Mammary epithelial cell (primary cell): ENCODE measurements at regions of chr5 and their contacts with region 1.

Region 1: GRCh38 chr5:134851307-134851923 is 5.6 kb downstream of the C5orf24 start:
- DNase-seq: peak; percentile 37
- H3K4me3 ChIP-seq: no peak overlapping the region
- H3K27ac ChIP-seq: no peak overlapping the region
- H3K4me1 ChIP-seq: peaks cover 4% of the 10 kb centered on the region
- H3K27me3 ChIP-seq: no peaks in the 10 kb centered on the region
- CTCF ChIP-seq: peak; percentile 45 to 74

Region 2: DNA sequence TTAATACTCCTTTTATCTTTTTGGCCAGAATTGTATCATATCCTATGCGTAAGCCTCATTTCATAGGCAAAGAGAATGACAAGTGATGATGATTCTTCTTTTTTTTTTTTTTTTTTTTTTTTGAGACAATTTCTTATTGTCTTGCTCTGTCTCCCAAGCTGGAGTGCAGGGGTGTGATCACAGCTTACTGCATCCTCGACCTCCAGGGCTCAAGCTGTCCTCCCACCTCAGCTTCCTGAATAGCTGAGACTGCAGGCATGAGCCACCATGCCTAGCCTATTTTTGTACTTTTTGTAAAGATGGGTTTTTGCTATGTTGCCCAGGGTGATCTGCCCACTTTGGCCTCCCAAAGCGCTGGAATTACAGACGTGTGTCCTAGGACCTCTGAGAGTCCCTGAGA is 47.6 kb before region 1 on chr5:
- CTCF ChIA-PET with region 1: no interaction called
- dilution Hi-C with region 1: no loop called
- in situ Hi-C with region 1: no loop called
- intact Hi-C with region 1: loop called (anchors 2 kb)
- DNase-seq: no peak
- H3K4me3 ChIP-seq: no peak overlapping the region
- H3K27ac ChIP-seq: no peak overlapping the region
- H3K4me1 ChIP-seq: peaks cover 6% of the 10 kb centered on the region
- H3K27me3 ChIP-seq: no peaks in the 10 kb centered on the region
- CTCF ChIP-seq: no peak

Region 3: DNA sequence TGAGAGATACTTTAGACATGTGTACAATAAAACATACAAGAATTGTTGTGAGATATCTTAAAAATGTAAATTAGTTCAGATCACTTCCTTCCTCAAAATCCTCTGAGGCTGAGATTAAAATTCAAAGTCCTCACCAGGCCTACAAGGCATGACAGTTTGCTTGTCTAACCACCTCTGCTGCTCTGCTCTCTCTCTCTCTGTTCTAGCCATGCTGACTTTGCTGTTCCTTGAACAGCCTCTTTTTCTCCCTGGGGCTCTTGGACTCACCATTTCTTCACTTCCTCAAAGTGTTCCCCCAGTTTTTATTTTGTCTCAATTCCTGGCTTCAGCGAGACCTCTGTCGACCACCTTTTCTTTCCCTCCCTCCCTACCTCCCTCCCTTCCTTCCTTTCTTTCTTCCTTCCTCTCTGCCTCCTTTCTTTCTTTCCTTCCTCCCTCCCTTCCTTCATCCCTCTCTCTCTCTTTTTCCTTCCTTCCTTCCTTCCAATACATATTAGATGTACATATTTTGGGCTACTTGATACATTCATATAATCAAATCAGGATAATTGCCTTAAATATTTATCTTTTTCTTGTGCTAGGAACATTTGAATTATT is 143.2 kb after region 1 on chr5:
- CTCF ChIA-PET with region 1: no interaction called
- dilution Hi-C with region 1: no loop called
- in situ Hi-C with region 1: no loop called
- intact Hi-C with region 1: no loop called
- DNase-seq: no peak
- H3K4me3 ChIP-seq: no peak overlapping the region
- H3K27ac ChIP-seq: no peak overlapping the region
- H3K4me1 ChIP-seq: no peaks in the 10 kb centered on the region
- H3K27me3 ChIP-seq: no peaks in the 10 kb centered on the region
- CTCF ChIP-seq: no peak

Region 4: GRCh38 chr5:135230251-135230925 is 379.0 kb after region 1 on chr5:
- CTCF ChIA-PET with region 1: no interaction called
- dilution Hi-C with region 1: no loop called
- in situ Hi-C with region 1: no loop called
- intact Hi-C with region 1: no loop called
- DNase-seq: no peak
- H3K4me3 ChIP-seq: no peak overlapping the region
- H3K27ac ChIP-seq: no peak overlapping the region
- H3K4me1 ChIP-seq: peaks cover 3% of the 10 kb centered on the region
- H3K27me3 ChIP-seq: no peaks in the 10 kb centered on the region
- CTCF ChIP-seq: no peak